ENCODE measurements at regions of chr20 and their contacts with region 1.

Region 1: DNA sequence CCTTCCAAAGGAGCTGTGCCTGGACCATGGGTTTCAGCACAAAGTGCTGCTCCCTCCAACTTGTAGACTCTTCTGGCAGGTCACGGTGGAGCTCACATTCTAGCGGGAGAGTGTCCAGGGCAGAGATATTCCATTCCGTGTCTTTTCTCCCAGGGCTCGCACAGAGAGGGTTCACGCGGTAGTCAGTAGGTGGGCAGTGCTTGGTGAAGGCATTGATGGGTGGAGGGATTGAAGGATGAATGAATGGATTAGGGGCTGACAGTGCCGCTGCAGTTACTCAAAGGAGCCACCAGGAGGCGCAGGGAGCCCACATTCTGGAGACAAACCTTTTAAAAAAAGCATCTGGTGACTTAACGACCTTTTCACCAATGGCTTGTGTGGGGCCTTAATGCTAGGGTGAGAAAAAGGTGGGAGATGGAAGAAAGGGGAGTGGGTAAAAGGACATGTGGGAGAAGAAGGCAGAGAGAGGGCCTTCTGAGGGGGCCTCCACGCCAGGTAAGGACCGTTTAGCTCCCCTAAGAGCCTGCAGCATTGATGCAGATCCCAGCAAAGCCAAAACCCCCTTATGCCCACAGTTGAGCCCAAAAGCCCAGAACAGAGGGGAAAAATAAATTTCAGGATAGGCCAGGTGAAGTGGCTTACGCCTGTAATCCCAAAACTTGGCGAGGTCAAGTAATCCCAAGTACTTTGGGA is 17.5 kb upstream of the FAM110A start:
- DNase-seq: peak; percentile 83 to 91
- H3K4me3 ChIP-seq: no peak overlapping the region
- H3K27ac ChIP-seq: no peak overlapping the region
- H3K4me1 ChIP-seq: no peaks in the 10 kb centered on the region
- H3K27me3 ChIP-seq: no peaks in the 10 kb centered on the region
- CTCF ChIP-seq: peak; percentile 96 to 97 (median 97)
- POLR2A ChIP-seq: no peak

Region 2: DNA sequence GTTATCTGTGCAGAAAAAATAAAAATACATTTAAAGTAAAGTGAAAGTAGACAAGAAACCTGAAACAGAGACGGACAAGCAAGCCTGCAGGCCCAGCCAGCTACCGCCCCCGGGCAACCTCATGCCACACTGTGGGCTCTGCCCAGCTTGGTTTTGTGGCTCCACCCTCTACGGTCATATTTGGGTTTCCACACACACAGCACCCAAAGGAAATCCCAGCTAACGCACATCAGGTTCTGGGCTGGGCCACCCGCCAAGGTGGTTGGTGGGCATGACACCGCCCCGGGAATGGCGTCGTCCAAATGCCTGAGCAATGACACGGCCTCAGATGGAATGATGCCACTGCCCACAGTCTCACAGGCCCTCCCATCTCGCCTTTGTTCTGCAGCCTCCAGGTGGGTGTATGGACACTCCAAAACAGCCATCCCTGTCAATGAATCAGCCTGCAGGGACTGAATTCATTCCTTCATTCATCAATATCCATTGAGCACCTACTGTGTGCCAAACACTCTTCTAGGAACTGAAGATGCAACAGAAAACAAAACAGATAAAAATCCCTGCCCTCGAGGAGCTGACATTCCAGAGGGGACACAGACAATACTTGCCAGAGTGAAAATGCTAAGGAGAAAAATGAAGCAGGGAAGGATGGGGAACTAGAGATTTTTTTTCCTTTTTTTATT is 40.4 kb after region 1 on chr20:
- intact Hi-C with region 1: no loop called
- DNase-seq: no peak
- H3K4me3 ChIP-seq: no peak overlapping the region
- H3K27ac ChIP-seq: no peak overlapping the region
- H3K4me1 ChIP-seq: peaks cover 13% of the 10 kb centered on the region
- H3K27me3 ChIP-seq: no peaks in the 10 kb centered on the region
- CTCF ChIP-seq: no peak
- POLR2A ChIP-seq: no peak

Region 3: GRCh38 chr20:958936-959815 is 143.1 kb after region 1 on chr20:
- intact Hi-C with region 1: loop called (anchors 1 kb)
- DNase-seq: no peak
- H3K4me3 ChIP-seq: no peak overlapping the region
- H3K27ac ChIP-seq: no peak overlapping the region
- H3K4me1 ChIP-seq: no peaks in the 10 kb centered on the region
- H3K27me3 ChIP-seq: no peaks in the 10 kb centered on the region
- CTCF ChIP-seq: no peak
- POLR2A ChIP-seq: no peak

Region 4: GRCh38 chr20:1209447-1210387 is 393.7 kb after region 1 on chr20:
- intact Hi-C with region 1: loop called (anchors 10 kb)
- DNase-seq: peak in 1 of 2 donors; percentile 29
- H3K4me3 ChIP-seq: no peak overlapping the region
- H3K27ac ChIP-seq: no peak overlapping the region
- H3K4me1 ChIP-seq: no peaks in the 10 kb centered on the region
- H3K27me3 ChIP-seq: no peaks in the 10 kb centered on the region
- CTCF ChIP-seq: no peak
- POLR2A ChIP-seq: no peak

Measured in vagina (tissue), 2 donors.